ENCODE measurements at regions of chr4 and their contacts with region 1.

Region 1: DNA sequence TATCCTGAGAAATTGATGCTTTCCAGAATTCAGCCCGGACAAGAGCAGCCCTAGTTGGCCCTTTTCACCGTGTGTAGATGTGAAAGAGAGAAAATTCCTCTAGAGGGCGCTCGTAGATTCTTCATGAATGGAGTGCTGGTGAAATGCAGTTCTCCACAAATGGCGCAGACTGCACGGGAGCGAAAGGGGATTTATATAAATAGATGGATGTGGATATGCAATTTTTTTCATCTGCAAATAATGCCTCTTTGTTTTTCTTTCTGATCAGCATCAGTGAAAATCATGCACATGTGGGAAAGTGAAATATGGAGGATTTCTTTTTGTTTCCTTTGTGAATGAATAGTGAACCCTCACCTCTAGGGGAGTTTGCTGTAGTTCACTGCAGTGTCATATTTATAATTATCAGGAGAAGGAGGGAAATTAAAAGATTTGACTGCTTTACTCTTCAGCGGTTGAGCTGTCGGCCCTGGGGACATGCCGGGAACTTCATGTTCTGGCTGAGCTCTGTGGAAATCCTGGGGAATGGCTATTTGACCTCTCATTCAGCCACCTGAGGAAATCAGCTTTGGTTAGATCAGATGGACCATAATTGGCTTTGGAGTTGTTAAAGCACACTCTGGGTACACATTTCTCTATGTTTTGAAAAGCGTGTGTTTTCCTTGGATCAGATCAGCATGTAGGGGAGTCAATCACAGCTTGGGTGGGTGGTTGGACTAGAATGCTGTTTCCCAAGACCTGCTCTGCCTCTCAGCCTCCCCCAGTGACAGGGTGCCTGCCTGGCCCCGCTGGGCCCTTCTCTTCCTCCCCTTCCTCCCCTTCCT is 115.0 kb upstream of the SHISA3 start:
- DNase-seq: peak; percentile 15 to 19
- H3K4me3 ChIP-seq: no peak overlapping the region
- H3K27ac ChIP-seq: no peak overlapping the region
- H3K4me1 ChIP-seq: no peaks in the 10 kb centered on the region
- H3K27me3 ChIP-seq: no peaks in the 10 kb centered on the region
- CTCF ChIP-seq: peak; percentile 48 to 73 (median 58)
- POLR2A ChIP-seq: no peak

Region 2: GRCh38 chr4:42070463-42070862 is 211.8 kb before region 1 on chr4:
- intact Hi-C with region 1: no loop called
- DNase-seq: no peak
- H3K4me3 ChIP-seq: no peak overlapping the region
- H3K27ac ChIP-seq: no peak overlapping the region
- H3K4me1 ChIP-seq: no peaks in the 10 kb centered on the region
- H3K27me3 ChIP-seq: no peaks in the 10 kb centered on the region
- CTCF ChIP-seq: no peak
- POLR2A ChIP-seq: no peak

Region 3: GRCh38 chr4:42519803-42520417 is 237.6 kb after region 1 on chr4:
- intact Hi-C with region 1: loop called (anchors 10 kb)
- DNase-seq: peak in 1 of 2 donors; percentile 21
- H3K4me3 ChIP-seq: no peak overlapping the region
- H3K27ac ChIP-seq: no peak overlapping the region
- H3K4me1 ChIP-seq: no peaks in the 10 kb centered on the region
- H3K27me3 ChIP-seq: no peaks in the 10 kb centered on the region
- CTCF ChIP-seq: peak; percentile 48 to 68 (median 60)
- POLR2A ChIP-seq: no peak

Measured in uterus (tissue), 4 donors.